SK-N-SH (cell line): ENCODE measurements at regions of chr5 and their contacts with region 1.

Region 1: GRCh38 chr5:141960449-141961202 is 2.6 kb upstream of the PCDH12 start:
- DNase-seq: peak; percentile 87
- H3K4me3 ChIP-seq: peak overlapping the region in 1 of 2 experiments; percentile 43; a peak in 1 of 4 replicates
- H3K27ac ChIP-seq: no peak overlapping the region
- H3K4me1 ChIP-seq: peaks cover 0 to 17% of the 10 kb centered on the region in 2 experiments; a peak in 2 of 4 replicates
- H3K27me3 ChIP-seq: no peaks in the 10 kb centered on the region
- CTCF ChIP-seq: peak; percentile 89
- EP300 ChIP-seq: no peak
- RAD21 ChIP-seq: peak; percentile 90

Region 2: DNA sequence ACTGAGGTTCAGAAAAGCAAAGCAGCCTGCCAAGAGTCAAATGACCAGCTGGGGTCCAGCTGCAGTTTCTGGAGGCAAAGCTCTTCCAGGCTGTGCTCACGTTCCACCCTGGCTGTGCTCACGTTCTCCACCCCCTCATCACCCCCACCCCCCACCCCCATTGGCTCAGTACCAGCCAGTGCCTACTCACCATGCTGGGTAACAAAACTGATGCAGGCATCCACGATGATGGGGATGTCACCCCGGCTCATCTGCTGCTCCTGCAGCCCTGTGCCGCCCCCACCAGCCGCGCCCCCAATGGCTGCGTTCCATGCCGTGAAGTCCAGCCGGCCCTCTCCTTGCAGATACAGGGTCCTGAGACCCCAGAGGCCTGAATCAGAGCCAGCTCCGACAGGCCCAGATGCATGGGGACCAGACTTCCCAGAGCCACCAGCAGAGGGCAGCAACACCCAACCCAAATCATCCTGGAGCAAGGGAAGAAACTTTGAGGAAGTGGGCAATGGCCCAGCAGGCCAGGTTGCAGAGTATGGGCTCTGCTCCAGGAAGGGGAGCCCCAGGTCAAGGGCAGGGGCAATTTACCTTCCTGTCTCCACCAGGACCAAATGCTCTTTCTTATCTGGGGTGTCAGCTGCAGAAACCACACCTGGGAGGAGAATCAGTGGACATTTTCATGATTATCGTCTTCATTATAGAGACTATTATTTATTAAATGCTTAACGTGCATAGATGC is 295.7 kb before region 1 on chr5:
- CTCF ChIA-PET with region 1: interaction called, 55 read pairs
- POLR2A ChIA-PET with region 1: interaction called, 3 read pairs
- DNase-seq: peak; percentile 90
- H3K4me3 ChIP-seq: no peak overlapping the region; a peak in 1 of 4 replicates
- H3K27ac ChIP-seq: no peak overlapping the region
- H3K4me1 ChIP-seq: no peaks in the 10 kb centered on the region; a peak in 1 of 4 replicates
- H3K27me3 ChIP-seq: no peaks in the 10 kb centered on the region
- CTCF ChIP-seq: peak; percentile 89
- EP300 ChIP-seq: no peak
- RAD21 ChIP-seq: peak; percentile 83

Region 3: GRCh38 chr5:141691867-141692532 is 268.6 kb before region 1 on chr5:
- CTCF ChIA-PET with region 1: interaction called, 325 read pairs
- POLR2A ChIA-PET with region 1: no interaction called
- DNase-seq: peak; percentile 92
- H3K4me3 ChIP-seq: peak overlapping the region; percentile 40 to 54
- H3K27ac ChIP-seq: no peak overlapping the region
- H3K4me1 ChIP-seq: peaks cover 0 to 23% of the 10 kb centered on the region in 2 experiments; a peak in 2 of 4 replicates
- H3K27me3 ChIP-seq: peaks cover 28% of the 10 kb centered on the region
- CTCF ChIP-seq: peak; percentile 91
- EP300 ChIP-seq: no peak
- RAD21 ChIP-seq: peak; percentile 96

Region 4: DNA sequence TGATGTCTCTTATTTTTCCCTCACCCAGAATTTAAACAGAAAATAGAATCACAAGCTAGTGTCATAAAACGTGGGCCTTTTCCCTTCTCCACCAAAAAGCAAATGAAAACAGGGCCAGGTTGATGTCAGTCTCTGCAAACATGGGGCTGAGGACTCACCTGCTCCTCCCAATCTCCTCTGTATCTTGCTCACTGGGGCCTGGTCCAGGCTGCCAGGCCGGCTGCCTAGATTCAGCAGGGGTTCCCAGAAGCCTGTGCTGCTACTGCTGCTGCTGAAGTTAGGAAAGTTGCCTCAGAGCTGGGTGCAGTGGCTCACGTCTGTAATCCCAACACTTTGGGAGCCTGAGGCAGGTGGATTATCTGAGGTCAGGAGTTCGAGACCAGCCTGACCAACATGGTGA is 166.7 kb before region 1 on chr5:
- CTCF ChIA-PET with region 1: no interaction called
- POLR2A ChIA-PET with region 1: no interaction called
- DNase-seq: no peak
- H3K4me3 ChIP-seq: no peak overlapping the region
- H3K27ac ChIP-seq: no peak overlapping the region
- H3K4me1 ChIP-seq: peaks cover 0 to 5% of the 10 kb centered on the region in 2 experiments; a peak in 1 of 4 replicates
- H3K27me3 ChIP-seq: peaks cover 14% of the 10 kb centered on the region; the same call in 1 of the 2 replicates
- CTCF ChIP-seq: no peak
- EP300 ChIP-seq: no peak
- RAD21 ChIP-seq: no peak

Region 5: DNA sequence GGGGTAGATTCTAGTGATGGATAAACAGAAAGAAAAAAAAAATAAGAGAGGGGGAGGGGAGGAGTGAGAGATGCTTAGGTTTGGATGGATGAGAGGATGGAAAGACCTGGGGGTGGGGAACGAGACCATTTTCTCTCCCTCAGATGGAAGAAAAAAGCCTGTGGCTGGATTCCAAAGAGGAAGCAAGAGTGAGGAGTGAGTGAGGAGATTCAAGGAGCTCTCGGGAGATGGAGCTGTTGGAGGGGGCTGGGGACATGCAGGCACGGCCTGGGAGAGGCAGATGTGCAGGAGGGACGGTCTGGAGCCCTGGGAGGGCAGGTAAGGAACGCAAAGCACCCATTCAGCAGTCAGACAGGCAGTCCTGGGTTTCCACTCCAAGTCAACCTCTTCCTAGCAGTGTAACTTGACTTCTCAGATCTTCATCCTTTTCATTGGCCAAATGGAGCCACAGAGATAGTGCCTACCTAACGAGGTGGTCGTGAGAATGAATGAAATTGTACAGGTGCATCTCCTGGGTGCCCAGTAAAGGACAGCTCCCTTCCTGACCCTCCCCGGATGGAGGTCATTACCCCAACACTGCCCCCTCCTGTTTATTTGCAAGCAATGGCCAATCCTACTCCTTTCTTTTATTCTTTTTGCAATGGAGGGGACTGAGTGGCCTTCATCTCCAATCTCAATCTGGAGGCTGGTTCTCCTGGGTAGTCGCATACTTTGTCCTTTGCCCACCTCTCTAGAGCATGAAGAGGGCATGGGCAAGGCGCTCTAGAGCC is 134.7 kb before region 1 on chr5:
- CTCF ChIA-PET with region 1: interaction called, 14 read pairs
- POLR2A ChIA-PET with region 1: no interaction called
- DNase-seq: peak; percentile 64
- H3K4me3 ChIP-seq: no peak overlapping the region; a peak in 1 of 4 replicates
- H3K27ac ChIP-seq: peak overlapping the region in 1 of 2 experiments; percentile 66; a peak in 2 of 4 replicates
- H3K4me1 ChIP-seq: peaks cover 8 to 42% of the 10 kb centered on the region in 2 experiments; a peak in 2 of 4 replicates
- H3K27me3 ChIP-seq: peaks cover 7% of the 10 kb centered on the region
- CTCF ChIP-seq: peak; percentile 55
- EP300 ChIP-seq: no peak
- RAD21 ChIP-seq: peak; percentile 44

Region 6: DNA sequence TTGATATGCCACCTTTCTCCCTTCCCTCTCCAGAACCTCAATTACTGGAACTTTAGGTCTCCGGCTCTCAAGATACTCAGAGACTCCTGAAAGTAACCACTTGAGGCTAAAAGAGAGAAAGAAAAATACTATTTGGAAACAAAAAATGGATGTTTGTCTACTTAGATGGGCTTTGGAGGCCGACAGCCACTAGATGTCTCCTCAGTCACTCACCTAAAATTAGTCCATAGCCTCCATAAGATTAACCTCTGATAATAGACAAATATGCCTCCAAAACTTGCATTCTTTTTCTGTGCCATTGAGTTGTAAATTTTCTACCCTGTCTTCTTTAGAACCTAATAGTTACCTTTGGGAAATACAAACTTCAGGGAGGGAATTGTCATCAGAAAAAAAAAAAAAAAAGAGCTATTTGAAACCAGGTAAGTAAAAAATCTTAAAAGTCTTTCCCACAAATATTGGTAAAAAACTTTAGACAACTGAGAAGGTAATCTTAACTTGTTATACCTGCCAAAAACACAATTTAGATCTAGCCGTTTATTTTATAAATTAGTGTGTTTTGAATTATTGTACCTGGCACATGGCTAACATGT is 71.2 kb before region 1 on chr5:
- CTCF ChIA-PET with region 1: interaction called, 121 read pairs
- POLR2A ChIA-PET with region 1: no interaction called
- DNase-seq: peak; percentile 38
- H3K4me3 ChIP-seq: no peak overlapping the region
- H3K27ac ChIP-seq: no peak overlapping the region
- H3K4me1 ChIP-seq: no peaks in the 10 kb centered on the region
- H3K27me3 ChIP-seq: peaks cover 10% of the 10 kb centered on the region; the same call in 1 of the 2 replicates
- CTCF ChIP-seq: peak; percentile 48
- EP300 ChIP-seq: no peak
- RAD21 ChIP-seq: peak; percentile 69

Region 7: DNA sequence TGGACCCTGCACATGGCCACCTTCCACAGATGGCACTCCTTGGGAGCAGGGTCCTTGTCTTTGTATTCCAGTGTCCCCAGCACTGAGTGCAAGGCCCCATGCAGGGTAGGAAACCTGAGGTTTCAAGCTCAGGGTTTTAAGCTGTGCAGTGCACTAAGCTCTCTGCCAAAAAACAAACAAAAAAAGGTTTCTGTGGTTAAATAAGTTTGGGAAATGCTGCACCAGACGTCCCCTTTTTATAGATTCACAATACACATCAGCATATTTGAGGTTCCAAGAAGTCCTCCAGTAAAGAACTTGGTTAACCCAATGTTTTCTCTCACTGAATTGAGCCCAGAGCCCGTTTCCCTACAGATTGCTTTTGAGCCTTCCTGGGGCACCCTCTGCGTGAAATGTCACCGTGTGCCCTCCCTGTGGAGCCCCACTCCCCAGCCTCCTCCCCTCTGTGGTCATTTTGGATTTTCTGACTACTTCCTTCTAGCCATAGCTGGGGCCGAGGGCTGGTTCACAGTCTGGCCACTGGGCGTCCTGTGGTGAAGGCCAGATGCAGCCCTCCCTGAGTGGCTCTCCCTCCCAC is 19.8 kb before region 1 on chr5:
- CTCF ChIA-PET with region 1: interaction called, 256 read pairs
- POLR2A ChIA-PET with region 1: interaction called, 4 read pairs
- DNase-seq: no peak
- H3K4me3 ChIP-seq: no peak overlapping the region
- H3K27ac ChIP-seq: peak overlapping the region in 1 of 2 experiments; percentile 20; a peak in 1 of 4 replicates
- H3K4me1 ChIP-seq: peaks cover 0 to 15% of the 10 kb centered on the region in 2 experiments; a peak in 1 of 4 replicates
- H3K27me3 ChIP-seq: no peaks in the 10 kb centered on the region
- CTCF ChIP-seq: no peak; the same call in 1 of the 2 replicates
- EP300 ChIP-seq: no peak
- RAD21 ChIP-seq: no peak

Region 8: GRCh38 chr5:142324871-142325724 is 364.5 kb after region 1 on chr5 and contains the start of gene SPRY4:
- CTCF ChIA-PET with region 1: no interaction called
- POLR2A ChIA-PET with region 1: no interaction called
- DNase-seq: peak; percentile 95
- H3K4me3 ChIP-seq: peak within 1 kb of the TSS; percentile 93 to 95
- H3K27ac ChIP-seq: peak within 1 kb of the TSS; percentile 98
- H3K4me1 ChIP-seq: peaks cover 31 to 50% of the 10 kb centered on the region in 2 experiments
- H3K27me3 ChIP-seq: no peaks in the 10 kb centered on the region
- CTCF ChIP-seq: 0 out of 2 replicates have a peak, but pooled peaks have one; percentile 5
- EP300 ChIP-seq: peak; percentile 36 to 51; a peak in 2 of 4 replicates
- RAD21 ChIP-seq: peak; percentile 39
- polyA plus RNA-seq, gene SPRY4: 12.2 and 18.0 TPM in 2 replicates